ENCODE measurements at regions of chr9 and their contacts with region 1.

Region 1: GRCh38 chr9:115013998-115014397 is 83.6 kb upstream of the TNFSF8 start:
- DNase-seq: peak; percentile 47
- H3K4me3 ChIP-seq: no peak overlapping the region
- H3K27ac ChIP-seq: no peak overlapping the region
- H3K4me1 ChIP-seq: no peaks in the 10 kb centered on the region
- H3K27me3 ChIP-seq: peaks cover 3 to 5% of the 10 kb centered on the region in 2 experiments
- CTCF ChIP-seq: peak; percentile 62 to 72
- POLR2A ChIP-seq: no peak

Region 2: DNA sequence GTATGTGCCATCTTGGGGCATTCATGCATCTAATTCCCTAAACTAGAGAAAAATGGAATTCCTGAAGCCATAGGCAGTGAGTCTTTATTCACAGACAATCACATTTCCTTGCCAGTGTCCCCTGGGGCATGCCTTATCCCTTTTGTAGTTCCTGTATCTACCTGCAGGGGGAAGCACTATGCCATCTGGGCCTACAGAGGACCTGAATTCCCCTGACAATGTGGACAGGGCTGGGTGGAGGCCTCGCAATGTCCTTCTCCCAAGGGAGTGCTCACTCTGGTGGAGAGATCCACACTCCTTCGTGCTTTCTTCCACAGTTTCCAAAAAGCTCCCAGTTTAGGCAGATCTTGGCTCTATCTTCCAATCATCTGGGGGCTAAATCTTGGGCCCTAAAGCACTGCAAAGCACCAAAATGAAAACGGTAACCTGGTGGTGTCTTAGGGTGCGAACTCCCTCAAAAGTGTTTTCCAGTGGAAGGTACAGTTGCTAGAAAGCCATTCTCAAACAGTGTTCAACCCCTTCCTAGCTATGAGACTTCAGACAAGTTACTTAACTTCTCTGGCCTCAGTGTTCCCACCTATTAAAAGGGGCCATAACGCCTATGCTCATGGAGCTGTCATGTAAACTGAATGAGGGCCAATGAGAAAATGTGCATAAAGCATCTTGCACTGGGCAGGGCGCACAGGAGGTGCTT is 526.2 kb before region 1 on chr9:
- CTCF ChIA-PET with region 1: interaction called, 4 read pairs
- POLR2A ChIA-PET with region 1: no interaction called
- dilution Hi-C with region 1: no loop called
- intact Hi-C with region 1: loop called (anchors 1 kb)
- DNase-seq: peak; percentile 70
- H3K4me3 ChIP-seq: no peak overlapping the region
- H3K27ac ChIP-seq: no peak overlapping the region
- H3K4me1 ChIP-seq: no peaks in the 10 kb centered on the region
- H3K27me3 ChIP-seq: peaks cover 2% of the 10 kb centered on the region in 2 experiments
- CTCF ChIP-seq: peak; percentile 80 to 90
- POLR2A ChIP-seq: no peak

Region 3: GRCh38 chr9:114662081-114662989 is 351.7 kb before region 1 on chr9:
- CTCF ChIA-PET with region 1: interaction called, 43 read pairs
- POLR2A ChIA-PET with region 1: no interaction called
- dilution Hi-C with region 1: no loop called
- intact Hi-C with region 1: loop called (anchors 1 kb)
- DNase-seq: peak; percentile 50
- H3K4me3 ChIP-seq: no peak overlapping the region
- H3K27ac ChIP-seq: no peak overlapping the region
- H3K4me1 ChIP-seq: no peaks in the 10 kb centered on the region
- H3K27me3 ChIP-seq: peaks cover 5 to 9% of the 10 kb centered on the region in 2 experiments
- CTCF ChIP-seq: peak; percentile 79 to 80
- POLR2A ChIP-seq: no peak

Region 4: DNA sequence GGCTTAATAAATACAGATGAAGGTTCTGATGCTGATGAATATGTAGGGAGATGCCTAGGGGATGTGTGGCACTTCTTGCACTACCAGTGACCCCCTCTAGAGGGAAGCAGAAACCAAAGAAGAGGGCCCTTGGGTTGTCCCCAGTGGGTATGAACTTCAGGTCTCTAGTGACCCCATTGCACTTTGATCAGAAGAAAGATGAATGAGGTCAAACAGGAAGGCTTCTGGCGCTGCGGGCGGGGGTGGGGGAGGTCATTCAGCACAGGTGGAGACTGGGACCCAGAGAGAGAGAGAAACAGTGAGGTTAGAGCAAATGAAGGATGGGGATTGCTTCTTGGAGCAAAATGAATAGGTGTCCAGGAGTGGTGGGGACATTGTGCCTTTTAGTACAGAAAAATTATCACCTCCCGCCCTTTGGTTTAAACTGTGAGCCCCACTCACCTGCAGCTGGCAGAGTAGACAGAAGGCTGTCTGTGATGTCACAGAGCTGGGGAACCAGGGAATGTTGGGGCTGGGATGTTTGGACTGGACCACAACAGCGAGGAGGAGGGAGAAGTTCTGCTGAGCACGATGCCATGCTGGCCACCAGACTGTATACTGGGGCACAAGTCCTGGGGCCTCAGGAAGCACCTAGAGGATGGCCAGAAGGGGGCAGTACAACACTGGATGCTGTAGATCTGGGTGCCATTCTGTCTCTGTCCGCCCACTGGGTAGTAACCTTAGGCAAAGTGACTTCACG is 332.2 kb before region 1 on chr9 and contains the start of gene TEX48:
- CTCF ChIA-PET with region 1: interaction called, 144 read pairs
- POLR2A ChIA-PET with region 1: no interaction called
- dilution Hi-C with region 1: no loop called
- intact Hi-C with region 1: loop called (anchors 1 kb)
- DNase-seq: peak; percentile 52
- H3K4me3 ChIP-seq: no peak within 1 kb of the TSS
- H3K27ac ChIP-seq: no peak within 1 kb of the TSS
- H3K4me1 ChIP-seq: peaks cover 23% of the 10 kb centered on the region
- H3K27me3 ChIP-seq: no peaks in the 10 kb centered on the region
- CTCF ChIP-seq: peak; percentile 67 to 78
- POLR2A ChIP-seq: no peak
- total RNA-seq, gene TEX48: not detected in 2 replicates

Region 5: DNA sequence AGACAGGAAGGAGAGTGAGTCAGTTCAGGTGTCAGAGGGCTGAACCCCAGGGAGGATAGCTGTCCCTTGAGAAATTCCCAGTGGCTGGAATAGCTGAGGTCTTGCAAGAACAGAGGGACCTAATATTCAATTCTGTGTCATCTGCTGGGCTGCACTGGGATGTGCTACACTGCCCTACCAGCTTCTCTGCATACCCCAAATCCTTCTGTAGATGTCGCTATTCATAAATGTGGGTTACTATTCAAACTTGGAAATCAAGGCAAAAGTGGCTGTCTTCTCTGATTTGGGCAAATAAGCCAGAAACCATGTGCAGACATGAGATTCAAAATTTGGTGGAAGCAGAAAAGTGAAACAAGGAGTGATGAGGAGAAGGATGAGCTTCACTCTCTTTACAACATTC is 99.9 kb before region 1 on chr9:
- CTCF ChIA-PET with region 1: interaction called, 11 read pairs
- POLR2A ChIA-PET with region 1: no interaction called
- dilution Hi-C with region 1: no loop called
- intact Hi-C with region 1: loop called (anchors 1 kb)
- DNase-seq: no peak
- H3K4me3 ChIP-seq: no peak overlapping the region
- H3K27ac ChIP-seq: no peak overlapping the region
- H3K4me1 ChIP-seq: no peaks in the 10 kb centered on the region
- H3K27me3 ChIP-seq: peaks cover 3 to 11% of the 10 kb centered on the region in 2 experiments
- CTCF ChIP-seq: no peak
- POLR2A ChIP-seq: no peak

Region 6: GRCh38 chr9:115524453-115525059 is 510.6 kb after region 1 on chr9:
- CTCF ChIA-PET with region 1: no interaction called
- POLR2A ChIA-PET with region 1: no interaction called
- dilution Hi-C with region 1: no loop called
- intact Hi-C with region 1: loop called (anchors 10 kb)
- DNase-seq: peak; percentile 8
- H3K4me3 ChIP-seq: no peak overlapping the region
- H3K27ac ChIP-seq: no peak overlapping the region
- H3K4me1 ChIP-seq: no peaks in the 10 kb centered on the region
- H3K27me3 ChIP-seq: no peaks in the 10 kb centered on the region
- CTCF ChIP-seq: peak; percentile 26 to 50
- POLR2A ChIP-seq: no peak